AG04450 (cell line): ENCODE measurements at regions of chr4 and their contacts with region 1.

Region 1: DNA sequence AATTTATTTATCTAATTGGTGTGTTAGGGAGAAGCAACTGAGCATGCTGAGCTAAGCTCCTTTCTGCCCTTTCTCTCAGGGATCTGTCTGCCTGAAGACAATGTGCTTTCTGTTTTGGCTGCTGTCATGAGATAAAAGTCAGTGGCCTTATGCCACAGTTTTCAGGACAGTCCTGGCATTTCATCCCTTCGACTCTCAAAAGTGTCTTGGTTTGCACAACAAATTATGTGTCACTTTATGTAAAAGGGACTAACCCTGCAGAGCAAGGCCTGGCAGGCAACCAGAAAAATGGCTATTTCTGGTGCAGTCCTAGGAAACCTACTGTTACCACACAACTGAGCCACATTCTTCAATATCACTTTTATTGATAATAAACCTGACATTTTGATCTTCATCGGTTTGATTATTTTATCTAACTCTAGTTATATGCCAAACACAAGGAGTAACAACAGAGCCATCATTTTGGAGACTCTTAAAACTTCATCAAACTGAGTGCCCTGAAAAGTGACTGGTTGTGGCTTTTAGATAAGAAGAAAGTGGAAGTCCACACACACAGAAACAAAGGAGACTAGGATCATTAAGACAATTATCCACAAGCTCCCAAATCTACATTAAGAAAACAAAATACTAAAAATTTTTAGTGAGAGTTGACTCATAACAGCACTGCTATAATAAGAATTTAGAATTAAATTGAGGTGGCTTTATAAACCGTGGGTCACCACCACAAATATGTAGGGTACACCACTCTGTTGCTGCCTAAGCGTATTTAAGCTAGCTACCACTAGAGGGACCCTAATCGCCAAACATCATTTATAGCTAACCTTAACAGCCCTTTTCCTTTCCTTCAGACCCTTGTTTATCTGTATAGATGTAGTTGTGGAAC is 95.9 kb upstream of the PTPN13 start:
- DNase-seq: peak; percentile 43
- H3K4me3 ChIP-seq: no peak overlapping the region
- H3K27ac ChIP-seq: no peak overlapping the region
- H3K27me3 ChIP-seq: no peaks in the 10 kb centered on the region
- CTCF ChIP-seq: peak; percentile 82

Region 2: DNA sequence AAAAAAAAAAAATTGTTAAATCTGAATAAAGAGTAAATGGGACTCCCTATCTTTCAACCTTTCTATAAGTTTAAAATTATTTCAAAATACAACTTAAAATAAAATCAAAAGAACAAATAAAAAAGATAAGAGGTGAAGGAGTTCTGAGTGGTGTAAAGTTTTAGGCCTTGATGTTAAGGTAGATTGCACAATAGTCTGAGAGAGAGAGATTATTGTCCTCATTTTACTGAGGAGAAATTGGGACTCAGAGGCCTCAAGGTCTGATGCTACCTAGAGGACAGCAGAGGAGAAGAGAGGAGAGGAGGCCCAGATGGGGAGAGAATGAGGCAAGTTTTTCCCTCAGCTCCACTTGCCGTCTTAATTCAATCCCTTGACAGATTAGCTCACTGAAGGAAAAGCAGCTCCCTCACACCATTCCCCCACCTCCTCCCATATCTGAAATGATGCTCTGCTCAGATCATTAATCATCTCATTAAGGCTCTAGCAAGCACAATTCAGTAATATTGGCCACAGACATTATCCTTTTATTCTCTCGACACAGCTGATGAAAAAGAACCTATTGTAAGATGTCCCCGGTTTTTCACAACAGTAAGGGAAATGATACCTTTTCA is 10.4 kb before region 1 on chr4:
- CTCF ChIA-PET with region 1: interaction called, 51 read pairs
- POLR2A ChIA-PET with region 1: no interaction called
- DNase-seq: no peak
- H3K4me3 ChIP-seq: no peak overlapping the region
- H3K27ac ChIP-seq: no peak overlapping the region
- H3K27me3 ChIP-seq: no peaks in the 10 kb centered on the region
- CTCF ChIP-seq: no peak

Region 3: GRCh38 chr4:86522349-86522748 is 24.1 kb after region 1 on chr4:
- CTCF ChIA-PET with region 1: interaction called, 24 read pairs
- POLR2A ChIA-PET with region 1: no interaction called
- DNase-seq: no peak
- H3K4me3 ChIP-seq: no peak overlapping the region
- H3K27ac ChIP-seq: no peak overlapping the region
- H3K27me3 ChIP-seq: peaks cover 2% of the 10 kb centered on the region
- CTCF ChIP-seq: peak; percentile 33

Region 4: GRCh38 chr4:86556791-86557415 is 58.7 kb after region 1 on chr4:
- CTCF ChIA-PET with region 1: no interaction called
- POLR2A ChIA-PET with region 1: no interaction called
- DNase-seq: no peak
- H3K4me3 ChIP-seq: no peak overlapping the region
- H3K27ac ChIP-seq: no peak overlapping the region
- H3K27me3 ChIP-seq: no peaks in the 10 kb centered on the region
- CTCF ChIP-seq: no peak

Region 5: DNA sequence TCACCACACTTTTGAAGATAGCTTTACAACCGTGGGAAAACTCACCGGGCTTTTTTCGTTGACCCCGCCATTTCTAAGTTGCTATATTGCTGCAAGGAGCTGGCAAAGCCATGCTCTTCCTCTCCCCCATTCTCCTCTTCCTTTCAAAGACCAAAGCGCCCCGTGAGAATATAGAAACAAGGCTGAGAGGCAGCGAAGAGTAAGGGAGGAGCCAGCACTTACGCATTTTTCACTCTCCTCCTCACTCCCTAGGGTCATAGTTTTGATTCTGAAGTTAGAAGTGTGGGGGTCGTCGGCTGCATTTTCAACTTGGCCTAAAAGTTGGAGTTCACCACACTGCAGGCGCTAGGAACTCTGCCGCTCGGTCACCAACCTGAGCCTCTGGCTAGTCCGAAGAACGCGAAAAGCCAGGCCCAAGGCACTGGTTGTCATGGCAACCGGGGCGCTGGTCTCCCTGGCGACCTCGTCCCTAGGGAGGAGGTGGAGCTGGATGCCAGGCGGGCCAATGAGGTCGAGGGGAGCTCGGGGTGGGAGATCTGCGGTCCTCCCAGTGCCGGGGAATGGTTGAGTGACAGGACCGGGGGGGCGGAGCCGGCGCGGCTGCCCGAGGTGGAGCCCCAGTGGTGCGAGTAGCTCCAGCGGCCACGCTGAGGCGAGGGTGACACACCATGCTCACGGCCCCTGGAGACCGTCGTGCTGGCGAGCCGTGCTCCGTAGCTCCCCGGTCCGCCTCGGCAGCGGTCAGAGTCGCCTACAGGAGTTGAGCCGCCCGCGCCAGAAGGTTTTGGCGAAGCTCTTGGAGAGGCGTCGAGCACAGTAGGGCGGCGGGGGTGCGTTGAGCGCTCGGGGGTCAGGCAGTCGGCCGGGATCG is 95.7 kb after region 1 on chr4 and contains the start of gene PTPN13:
- CTCF ChIA-PET with region 1: interaction called, 27 read pairs
- POLR2A ChIA-PET with region 1: interaction called, 4 read pairs
- DNase-seq: peak; percentile 97
- H3K4me3 ChIP-seq: peak within 1 kb of the TSS; percentile 82
- H3K27ac ChIP-seq: peak within 1 kb of the TSS; percentile 84
- H3K27me3 ChIP-seq: no peaks in the 10 kb centered on the region
- CTCF ChIP-seq: no peak
- polyA plus RNA-seq, gene PTPN13: 25.0 and 26.7 TPM in 2 replicates

Region 6: GRCh38 chr4:86769794-86770193 is 271.6 kb after region 1 on chr4:
- CTCF ChIA-PET with region 1: interaction called, 10 read pairs
- POLR2A ChIA-PET with region 1: no interaction called
- DNase-seq: no peak
- H3K4me3 ChIP-seq: no peak overlapping the region
- H3K27ac ChIP-seq: no peak overlapping the region
- H3K27me3 ChIP-seq: no peaks in the 10 kb centered on the region
- CTCF ChIP-seq: no peak

Region 7: GRCh38 chr4:86908251-86908657 is 410.0 kb after region 1 on chr4:
- CTCF ChIA-PET with region 1: interaction called, 101 read pairs
- POLR2A ChIA-PET with region 1: no interaction called
- DNase-seq: no peak
- H3K4me3 ChIP-seq: peak overlapping the region; percentile 11
- H3K27ac ChIP-seq: peak overlapping the region; percentile 42
- H3K27me3 ChIP-seq: no peaks in the 10 kb centered on the region
- CTCF ChIP-seq: no peak

Region 8: DNA sequence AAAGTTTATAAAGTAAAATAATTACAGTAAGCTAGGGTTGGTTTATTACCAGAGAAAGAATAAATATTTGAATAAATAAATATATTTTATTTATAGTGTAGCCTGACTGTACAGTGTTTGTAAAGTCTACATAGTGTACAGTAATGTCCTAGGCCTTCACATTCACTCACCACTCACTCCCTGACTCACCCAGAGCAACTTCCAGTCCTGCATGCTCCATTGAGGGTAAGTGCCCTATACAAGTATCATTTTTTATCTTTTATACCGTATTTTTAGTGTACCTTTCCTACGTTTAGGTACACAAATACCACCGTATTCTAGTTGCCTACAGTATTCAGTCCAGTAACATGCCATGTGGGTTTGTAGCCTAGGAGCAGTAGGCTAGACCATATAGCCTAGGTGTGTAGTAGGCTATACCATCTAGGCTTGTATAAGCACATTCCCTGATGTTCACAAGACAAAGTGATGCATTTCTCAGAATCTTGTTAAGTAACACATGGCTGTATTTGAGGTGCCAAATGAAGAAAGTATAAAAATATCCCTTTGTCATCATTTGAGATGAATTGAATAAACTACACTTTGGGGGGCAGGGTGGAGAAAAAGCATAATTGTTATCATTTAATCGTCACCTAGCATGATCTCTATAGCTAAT is 736.9 kb after region 1 on chr4:
- CTCF ChIA-PET with region 1: interaction called, 12 read pairs
- POLR2A ChIA-PET with region 1: no interaction called
- DNase-seq: no peak
- H3K4me3 ChIP-seq: peak overlapping the region; percentile 57; the same call in 1 of the 2 replicates
- H3K27ac ChIP-seq: no peak overlapping the region
- H3K27me3 ChIP-seq: no peaks in the 10 kb centered on the region
- CTCF ChIP-seq: no peak